OCI-LY7 (cell line): ENCODE measurements at regions of chr12 and their contacts with region 1.

Region 1: GRCh38 chr12:52023182-52023975 is 16.6 kb downstream of the TAMALIN start:
- DNase-seq: peak; percentile 90
- H3K4me3 ChIP-seq: peak overlapping the region; percentile 70
- H3K27ac ChIP-seq: peak overlapping the region; percentile 56
- H3K4me1 ChIP-seq: peaks cover 65% of the 10 kb centered on the region
- CTCF ChIP-seq: peak; percentile 95

Region 2: DNA sequence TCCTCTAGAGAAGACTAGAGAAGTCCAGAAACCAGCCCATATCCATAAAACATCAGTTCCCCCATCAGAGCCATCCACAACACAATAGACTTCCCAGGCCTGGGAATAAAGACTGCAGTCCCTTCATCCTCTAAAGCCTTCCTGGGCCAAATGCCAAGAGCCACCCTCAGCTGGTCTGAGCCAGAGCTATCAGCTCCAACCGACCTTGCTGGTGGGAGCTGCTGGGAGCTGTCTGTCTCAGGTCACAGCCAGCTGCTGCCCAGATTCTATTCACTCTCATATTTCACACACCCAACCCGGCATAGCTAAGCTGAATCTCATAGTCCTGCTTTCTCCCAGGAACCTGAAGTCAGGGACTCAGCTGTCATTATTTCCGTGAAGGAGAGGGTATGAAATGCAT is 839.6 kb before region 1 on chr12:
- CTCF ChIA-PET with region 1: no interaction called
- POLR2A ChIA-PET with region 1: no interaction called
- intact Hi-C with region 1: no loop called
- DNase-seq: no peak
- H3K4me3 ChIP-seq: no peak overlapping the region
- H3K27ac ChIP-seq: no peak overlapping the region
- H3K4me1 ChIP-seq: peaks cover 37% of the 10 kb centered on the region
- CTCF ChIP-seq: no peak

Region 3: DNA sequence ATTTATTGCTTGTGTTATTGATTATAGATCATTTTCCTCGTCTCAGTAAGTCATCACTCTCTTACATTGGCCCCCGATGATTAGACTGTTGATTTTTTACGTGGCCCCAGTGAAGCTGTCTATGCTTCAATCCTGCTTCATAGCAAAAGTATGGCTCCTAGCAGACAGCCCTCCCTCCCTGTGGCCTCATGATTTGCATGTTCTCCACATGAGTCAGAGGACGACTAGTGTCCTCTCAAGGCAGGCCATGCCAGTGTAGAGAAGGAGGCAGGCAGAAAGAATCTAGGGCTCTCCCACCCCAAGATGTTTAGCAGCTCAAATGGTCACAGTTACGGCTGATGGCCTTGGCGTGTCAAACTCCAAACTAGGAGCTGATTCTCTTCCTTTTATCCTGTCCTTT is 234.5 kb before region 1 on chr12:
- CTCF ChIA-PET with region 1: no interaction called
- POLR2A ChIA-PET with region 1: no interaction called
- intact Hi-C with region 1: no loop called
- DNase-seq: no peak
- H3K4me3 ChIP-seq: no peak overlapping the region
- H3K27ac ChIP-seq: no peak overlapping the region
- H3K4me1 ChIP-seq: no peaks in the 10 kb centered on the region
- CTCF ChIP-seq: no peak

Region 4: DNA sequence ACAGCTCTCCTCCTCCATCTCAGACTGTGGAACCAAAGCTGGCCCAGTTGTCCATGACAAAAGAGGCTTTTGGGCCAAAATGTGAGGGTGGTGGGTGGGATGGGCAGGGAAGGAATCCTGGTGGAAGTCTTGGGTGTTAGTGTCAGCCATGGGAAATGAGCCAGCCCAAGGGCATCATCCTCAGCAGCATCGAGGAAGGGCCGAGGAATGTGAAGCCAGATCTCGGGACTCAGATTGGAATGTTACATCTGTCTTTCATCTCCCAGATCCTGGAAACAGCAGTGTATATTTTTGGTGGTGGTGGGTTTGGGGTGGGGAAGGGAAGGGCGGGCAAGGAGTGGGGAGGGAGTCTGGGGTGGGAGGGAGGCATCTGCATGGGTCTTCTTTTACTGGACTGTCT is 28.4 kb before region 1 on chr12:
- CTCF ChIA-PET with region 1: interaction called, 11 read pairs
- POLR2A ChIA-PET with region 1: interaction called, 3 read pairs
- intact Hi-C with region 1: loop called (anchors 1 kb)
- DNase-seq: no peak
- H3K4me3 ChIP-seq: no peak overlapping the region
- H3K27ac ChIP-seq: no peak overlapping the region
- H3K4me1 ChIP-seq: peaks cover 4% of the 10 kb centered on the region
- CTCF ChIP-seq: no peak

Region 5: DNA sequence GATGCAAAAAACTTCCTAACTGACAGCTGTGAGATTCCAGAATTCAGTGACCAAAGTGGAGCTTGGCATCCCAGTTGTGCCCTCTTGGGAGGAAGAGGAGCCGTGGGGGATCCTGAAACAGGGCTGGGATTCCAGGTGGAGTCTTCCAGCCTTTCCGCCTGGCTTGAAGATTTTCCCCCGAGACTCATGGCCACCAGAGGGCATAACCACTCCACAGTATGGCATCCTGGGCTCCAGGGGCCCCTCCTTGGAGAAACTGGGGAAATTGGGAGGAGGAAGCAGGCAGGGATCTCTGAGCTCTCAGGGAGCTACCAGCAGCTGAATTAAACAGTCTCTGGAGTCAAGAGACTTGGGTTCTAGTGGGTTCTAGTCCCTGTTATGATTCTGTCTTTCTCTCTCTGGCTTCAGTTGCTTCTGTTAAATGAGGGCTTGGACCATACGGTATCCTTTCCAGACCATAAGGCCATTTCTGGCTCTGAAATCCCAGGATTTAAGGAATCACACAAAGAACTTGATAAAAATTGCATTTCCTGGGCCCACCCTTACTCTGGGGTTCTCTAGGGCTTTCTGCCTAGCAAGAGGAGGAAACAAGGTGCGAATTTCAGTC is 19.2 kb before region 1 on chr12:
- CTCF ChIA-PET with region 1: interaction called, 5 read pairs
- POLR2A ChIA-PET with region 1: interaction called, 4 read pairs
- intact Hi-C with region 1: loop called (anchors 1 kb)
- DNase-seq: no peak
- H3K4me3 ChIP-seq: no peak overlapping the region
- H3K27ac ChIP-seq: no peak overlapping the region
- H3K4me1 ChIP-seq: peaks cover 25% of the 10 kb centered on the region
- CTCF ChIP-seq: peak; percentile 81

Region 6: GRCh38 chr12:52050761-52051541 is 27.6 kb after region 1 on chr12 and contains the start of gene NR4A1:
- CTCF ChIA-PET with region 1: interaction called, 3 read pairs
- POLR2A ChIA-PET with region 1: interaction called, 3 read pairs
- intact Hi-C with region 1: loop called (anchors 2 kb)
- DNase-seq: peak; percentile 84
- H3K4me3 ChIP-seq: peak within 1 kb of the TSS; percentile 68
- H3K27ac ChIP-seq: peak within 1 kb of the TSS; percentile 66
- H3K4me1 ChIP-seq: peaks cover 36% of the 10 kb centered on the region
- CTCF ChIP-seq: peak; percentile 53
- total RNA-seq, gene NR4A1: 25.3 and 29.3 TPM in 2 replicates

Region 7: GRCh38 chr12:52069327-52070184 is 46.2 kb after region 1 on chr12 and contains the start of gene ATG101:
- CTCF ChIA-PET with region 1: interaction called, 9 read pairs
- POLR2A ChIA-PET with region 1: interaction called, 14 read pairs
- intact Hi-C with region 1: loop called (anchors 1 kb)
- DNase-seq: peak; percentile 98
- H3K4me3 ChIP-seq: peak within 1 kb of the TSS; percentile 91
- H3K27ac ChIP-seq: peak within 1 kb of the TSS; percentile 73
- H3K4me1 ChIP-seq: peaks cover 39% of the 10 kb centered on the region
- CTCF ChIP-seq: peak; percentile 81
- total RNA-seq, gene ATG101: 53.9 and 65.5 TPM in 2 replicates

Region 8: DNA sequence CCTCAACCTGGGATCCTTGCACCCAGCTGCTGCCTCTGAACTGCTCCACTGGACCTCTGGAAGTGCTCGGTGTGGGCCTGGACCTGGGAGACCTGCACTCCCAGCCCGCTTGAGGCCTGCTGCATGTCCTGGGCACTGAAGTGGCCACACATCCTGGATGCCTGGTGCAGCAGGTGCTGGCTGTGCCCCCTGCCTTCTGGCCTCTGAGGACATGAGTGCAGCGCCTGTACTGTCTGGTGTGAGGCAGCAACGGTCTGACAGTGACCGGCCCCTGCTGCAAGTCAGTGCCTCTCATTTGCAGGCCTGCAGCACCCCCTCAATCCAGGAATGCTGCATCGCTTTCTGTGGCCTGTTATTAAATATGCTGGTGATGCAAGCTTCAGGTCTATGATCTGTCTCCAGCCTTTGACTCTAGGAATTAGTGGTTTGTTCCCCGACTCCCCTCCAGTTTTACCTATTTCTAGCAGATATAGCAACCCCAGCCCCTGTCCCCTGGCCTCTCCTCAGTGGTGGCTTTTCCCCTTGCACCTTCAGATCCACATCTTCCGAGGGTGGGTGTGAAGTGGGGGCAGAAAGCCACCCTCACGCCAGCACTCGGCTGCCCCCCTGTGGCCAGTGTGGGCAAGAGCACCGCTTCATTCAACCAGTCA is 59.7 kb after region 1 on chr12:
- CTCF ChIA-PET with region 1: interaction called, 32 read pairs
- POLR2A ChIA-PET with region 1: interaction called, 26 read pairs
- intact Hi-C with region 1: loop called (anchors 1 kb)
- DNase-seq: peak; percentile 80
- H3K4me3 ChIP-seq: no peak overlapping the region
- H3K27ac ChIP-seq: peak overlapping the region; percentile 84
- H3K4me1 ChIP-seq: peaks cover 68% of the 10 kb centered on the region
- CTCF ChIP-seq: peak; percentile 100

Region 9: GRCh38 chr12:52121824-52122539 is 98.6 kb after region 1 on chr12:
- CTCF ChIA-PET with region 1: interaction called, 50 read pairs
- POLR2A ChIA-PET with region 1: interaction called, 33 read pairs
- intact Hi-C with region 1: loop called (anchors 1 kb)
- DNase-seq: peak; percentile 86
- H3K4me3 ChIP-seq: peak overlapping the region; percentile 27
- H3K27ac ChIP-seq: peak overlapping the region; percentile 41
- H3K4me1 ChIP-seq: peaks cover 70% of the 10 kb centered on the region
- CTCF ChIP-seq: peak; percentile 89